ENCODE measurements at regions of chr12 and their contacts with region 1.

Region 1: GRCh38 chr12:17992002-17992656 is 97.9 kb downstream of the RERGL start:
- DNase-seq: peak; percentile 57
- H3K4me3 ChIP-seq: no peak overlapping the region
- H3K27ac ChIP-seq: no peak overlapping the region
- H3K4me1 ChIP-seq: no peaks in the 10 kb centered on the region
- H3K27me3 ChIP-seq: no peaks in the 10 kb centered on the region
- CTCF ChIP-seq: peak; percentile 50 to 66
- POLR2A ChIP-seq: no peak

Region 2: GRCh38 chr12:16076553-16076952 is 1915.6 kb before region 1 on chr12:
- CTCF ChIA-PET with region 1: interaction called, 21 read pairs
- POLR2A ChIA-PET with region 1: no interaction called
- dilution Hi-C with region 1: no loop called
- intact Hi-C with region 1: no loop called
- DNase-seq: no peak
- H3K4me3 ChIP-seq: no peak overlapping the region
- H3K27ac ChIP-seq: no peak overlapping the region
- H3K4me1 ChIP-seq: no peaks in the 10 kb centered on the region
- H3K27me3 ChIP-seq: peaks cover 0 to 6% of the 10 kb centered on the region in 2 experiments
- CTCF ChIP-seq: peak; percentile 5 to 22
- POLR2A ChIP-seq: no peak

Region 3: GRCh38 chr12:16165506-16165905 is 1826.6 kb before region 1 on chr12:
- CTCF ChIA-PET with region 1: interaction called, 27 read pairs
- POLR2A ChIA-PET with region 1: no interaction called
- dilution Hi-C with region 1: no loop called
- intact Hi-C with region 1: loop called (anchors 5 kb)
- DNase-seq: peak; percentile 33
- H3K4me3 ChIP-seq: no peak overlapping the region
- H3K27ac ChIP-seq: no peak overlapping the region
- H3K4me1 ChIP-seq: no peaks in the 10 kb centered on the region
- H3K27me3 ChIP-seq: peaks cover 0 to 3% of the 10 kb centered on the region in 2 experiments
- CTCF ChIP-seq: peak in 1 of 2 donors; percentile 29
- POLR2A ChIP-seq: no peak

Region 4: GRCh38 chr12:16385782-16386646 is 1606.1 kb before region 1 on chr12:
- CTCF ChIA-PET with region 1: interaction called, 49 read pairs
- POLR2A ChIA-PET with region 1: no interaction called
- dilution Hi-C with region 1: no loop called
- intact Hi-C with region 1: loop called (anchors 5 kb)
- DNase-seq: peak; percentile 50
- H3K4me3 ChIP-seq: no peak overlapping the region
- H3K27ac ChIP-seq: no peak overlapping the region
- H3K4me1 ChIP-seq: no peaks in the 10 kb centered on the region
- H3K27me3 ChIP-seq: no peaks in the 10 kb centered on the region
- CTCF ChIP-seq: peak; percentile 28 to 44
- POLR2A ChIP-seq: no peak

Region 5: DNA sequence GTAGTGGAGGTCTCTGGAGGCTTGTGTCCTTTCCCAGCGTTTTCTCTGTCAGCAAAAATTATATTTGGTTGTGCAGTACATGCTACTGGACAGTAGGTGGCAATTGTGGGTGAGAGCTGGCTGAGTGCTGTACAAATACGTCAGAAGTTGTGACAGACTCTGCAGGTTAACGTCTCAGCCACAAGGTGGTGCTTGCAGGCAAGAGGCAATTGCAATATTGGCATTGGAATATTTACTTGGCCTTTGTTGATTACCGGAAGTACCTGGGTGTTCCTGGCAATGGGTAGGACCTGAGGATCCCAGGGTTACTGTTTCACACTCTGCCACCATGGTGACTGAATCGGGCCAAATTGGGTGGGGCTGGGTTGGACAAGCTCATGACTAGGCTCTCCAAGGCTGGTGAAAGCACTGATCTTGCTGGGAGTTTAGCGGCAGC is 1052.2 kb before region 1 on chr12:
- CTCF ChIA-PET with region 1: interaction called, 26 read pairs
- POLR2A ChIA-PET with region 1: no interaction called
- dilution Hi-C with region 1: no loop called
- intact Hi-C with region 1: loop called (anchors 1 kb)
- DNase-seq: peak; percentile 4
- H3K4me3 ChIP-seq: no peak overlapping the region
- H3K27ac ChIP-seq: no peak overlapping the region
- H3K4me1 ChIP-seq: no peaks in the 10 kb centered on the region
- H3K27me3 ChIP-seq: no peaks in the 10 kb centered on the region
- CTCF ChIP-seq: peak; percentile 50 to 70
- POLR2A ChIP-seq: no peak